ENCODE measurements at regions of chr2 and their contacts with region 1.

Region 1: DNA sequence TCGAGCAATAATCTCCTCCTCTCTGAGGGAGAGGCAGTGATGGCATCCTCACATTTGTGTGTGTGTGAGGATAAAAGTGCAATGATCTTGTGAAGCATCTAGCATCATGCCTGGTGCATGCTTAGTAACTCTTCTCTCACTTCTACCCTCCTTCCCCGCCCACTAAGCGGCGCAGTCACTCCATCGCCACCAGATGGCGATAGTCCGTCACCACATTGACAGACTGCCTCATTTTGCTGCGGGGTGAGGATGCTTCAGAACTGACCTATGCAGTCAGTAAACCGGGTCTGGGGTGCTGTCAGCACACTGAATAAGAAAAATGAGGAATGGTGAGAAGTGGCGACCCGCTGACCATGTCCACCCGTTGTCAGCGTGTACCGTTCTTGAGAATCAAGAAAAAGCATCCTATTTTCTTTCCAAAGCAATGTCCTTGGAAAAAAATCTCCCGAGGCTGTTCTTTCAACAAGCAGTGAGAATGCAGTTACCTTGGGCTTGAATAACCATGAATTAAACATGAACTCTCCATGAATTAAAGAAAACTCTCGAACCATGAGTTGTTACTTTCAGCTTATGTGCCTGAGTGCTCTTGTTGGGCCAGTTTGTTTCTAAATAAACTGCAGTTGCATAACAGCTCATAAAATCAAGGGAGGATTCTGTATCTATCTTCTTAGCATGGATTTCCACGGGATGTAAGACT is 37.3 kb upstream of the TMEM177 start:
- DNase-seq: peak; percentile 75
- H3K4me3 Mint-ChIP-seq: no peak overlapping the region
- H3K27ac Mint-ChIP-seq: no peak overlapping the region
- H3K4me1 Mint-ChIP-seq: peaks cover 1% of the 10 kb centered on the region
- H3K27me3 Mint-ChIP-seq: peaks cover 8% of the 10 kb centered on the region

Region 2: GRCh38 chr2:119659601-119660342 is 18.1 kb after region 1 on chr2:
- CTCF ChIA-PET with region 1: interaction called, 19 read pairs
- POLR2A ChIA-PET with region 1: no interaction called
- DNase-seq: peak; percentile 44
- H3K4me3 Mint-ChIP-seq: no peak overlapping the region
- H3K27ac Mint-ChIP-seq: no peak overlapping the region
- H3K4me1 Mint-ChIP-seq: peaks cover 15% of the 10 kb centered on the region
- H3K27me3 Mint-ChIP-seq: peaks cover 15% of the 10 kb centered on the region

Region 3: GRCh38 chr2:119678998-119679710 is 37.4 kb after region 1 on chr2 and contains the start of gene TMEM177:
- CTCF ChIA-PET with region 1: interaction called, 10 read pairs
- POLR2A ChIA-PET with region 1: no interaction called
- DNase-seq: peak; percentile 91
- H3K4me3 Mint-ChIP-seq: peak within 1 kb of the TSS; percentile 81
- H3K27ac Mint-ChIP-seq: peak within 1 kb of the TSS; percentile 77
- H3K4me1 Mint-ChIP-seq: peaks cover 24% of the 10 kb centered on the region
- H3K27me3 Mint-ChIP-seq: peaks cover 8% of the 10 kb centered on the region
- total RNA-seq, gene TMEM177: 8.3 to 8.5 TPM

Measured in activated CD4-positive, alpha-beta memory T cell treated with anti-CD3 and anti-CD28 coated beads, Interleukin-2, amount 10 ng/mL, durations not matched to agents 7 days and 5 days (primary cell).